HEK293 (cell line): ENCODE measurements at regions of chr2 and their contacts with region 1.

Region 1: DNA sequence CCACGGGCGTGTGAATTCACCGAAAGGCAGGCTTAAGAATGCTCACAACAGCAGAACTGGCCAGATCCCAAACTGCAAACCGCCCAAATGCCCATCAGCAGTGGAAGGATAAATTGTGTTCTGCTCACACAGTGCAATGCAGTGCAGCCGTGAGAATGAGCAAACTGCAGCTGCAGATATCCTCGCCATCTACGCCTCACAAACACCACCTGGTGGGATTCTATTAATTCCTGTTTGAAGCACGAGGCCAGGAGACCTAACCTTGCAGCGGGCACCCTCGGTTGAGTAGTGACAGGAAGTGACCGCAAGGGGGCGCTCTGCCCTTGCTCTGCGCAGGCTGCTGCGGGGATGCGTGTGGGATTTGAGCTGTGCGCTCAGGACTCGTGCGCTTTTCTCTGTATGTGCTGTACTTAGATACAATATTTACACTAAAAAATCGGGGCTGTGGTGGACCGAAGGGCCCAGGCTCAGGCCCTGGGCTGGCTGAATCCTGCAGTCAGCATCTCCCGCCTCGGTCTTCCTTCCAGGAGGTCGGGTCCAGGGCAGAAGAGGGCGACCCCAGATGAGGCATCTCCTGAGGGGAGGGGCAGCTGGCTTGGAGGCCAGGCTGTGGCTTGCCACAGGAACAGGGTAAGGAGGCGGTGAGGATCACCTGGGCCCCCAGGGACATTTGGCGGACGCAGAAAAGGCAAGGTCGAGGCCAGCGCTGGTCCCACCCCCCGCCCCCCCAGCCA is 19.8 kb upstream of the PDIA6 start:
- H3K4me3 ChIP-seq: no peak overlapping the region
- H3K27ac ChIP-seq: no peak overlapping the region
- H3K4me1 ChIP-seq: peaks cover 2% of the 10 kb centered on the region; the same call in 1 of the 2 replicates
- CTCF ChIP-seq: peak; percentile 95

Region 2: GRCh38 chr2:10817413-10817812 is 15.0 kb before region 1 on chr2:
- CTCF ChIA-PET with region 1: interaction called, 25 read pairs
- POLR2A ChIA-PET with region 1: interaction called, 3 read pairs
- H3K4me3 ChIP-seq: no peak overlapping the region
- H3K27ac ChIP-seq: no peak overlapping the region
- H3K4me1 ChIP-seq: no peaks in the 10 kb centered on the region; the same call in 1 of the 2 replicates
- CTCF ChIP-seq: peak; percentile 45; the same call in 1 of the 2 replicates

Region 3: GRCh38 chr2:10900216-10901109 is 68.1 kb after region 1 on chr2:
- CTCF ChIA-PET with region 1: interaction called, 35 read pairs
- POLR2A ChIA-PET with region 1: no interaction called
- H3K4me3 ChIP-seq: no peak overlapping the region
- H3K27ac ChIP-seq: no peak overlapping the region
- H3K4me1 ChIP-seq: no peaks in the 10 kb centered on the region
- CTCF ChIP-seq: no peak

Region 4: GRCh38 chr2:11073251-11073650 is 240.9 kb after region 1 on chr2:
- CTCF ChIA-PET with region 1: interaction called, 12 read pairs
- POLR2A ChIA-PET with region 1: no interaction called
- H3K4me3 ChIP-seq: no peak overlapping the region
- H3K27ac ChIP-seq: no peak overlapping the region
- H3K4me1 ChIP-seq: no peaks in the 10 kb centered on the region
- CTCF ChIP-seq: no peak

Region 5: GRCh38 chr2:11124503-11125068 is 292.2 kb after region 1 on chr2:
- CTCF ChIA-PET with region 1: interaction called, 185 read pairs
- POLR2A ChIA-PET with region 1: no interaction called
- H3K4me3 ChIP-seq: no peak overlapping the region
- H3K27ac ChIP-seq: no peak overlapping the region
- H3K4me1 ChIP-seq: no peaks in the 10 kb centered on the region
- CTCF ChIP-seq: peak; percentile 48; the same call in 1 of the 2 replicates